ENCODE measurements at regions of chr20 and their contacts with region 1.

Region 1: DNA sequence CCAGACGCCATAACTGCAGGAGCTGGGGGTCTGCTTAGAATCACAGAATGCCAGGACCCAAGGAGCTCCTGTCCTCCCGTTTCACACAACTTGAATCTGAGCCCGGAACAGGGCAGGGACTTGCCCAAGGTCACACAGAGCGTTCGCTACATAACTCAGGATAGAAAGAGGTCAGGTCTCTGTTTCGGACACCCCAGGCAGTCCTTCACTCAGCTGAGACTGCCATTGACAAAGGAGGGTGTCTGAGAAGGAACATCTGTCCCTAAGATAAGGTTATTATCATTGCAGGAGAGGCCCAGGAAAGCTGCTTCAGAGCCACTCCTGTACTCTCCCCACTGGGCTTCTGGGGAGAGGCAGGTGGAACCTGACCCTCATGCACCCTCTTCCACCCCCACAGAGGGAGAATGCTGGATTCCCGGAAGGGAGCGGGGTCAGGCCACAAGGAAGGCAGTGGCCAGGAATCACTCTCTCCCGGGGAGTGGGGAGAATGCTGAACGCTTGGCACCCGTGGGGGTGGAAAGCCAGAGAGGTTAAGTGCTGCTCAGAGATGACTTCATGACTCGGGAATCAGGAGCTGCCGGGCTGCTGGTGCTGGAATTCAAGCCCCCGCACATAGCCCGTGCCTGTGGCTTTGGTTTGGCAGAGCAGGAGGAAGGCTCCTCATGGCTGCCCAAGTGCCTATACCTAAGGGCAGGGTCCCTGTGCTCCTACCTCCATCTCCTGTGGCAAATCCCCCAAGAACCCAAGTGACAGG is 10.7 kb downstream of the SDC4 start:
- DNase-seq: no peak
- ATAC-seq: no peak
- H3K4me3 Mint-ChIP-seq: no peak overlapping the region
- H3K27ac Mint-ChIP-seq: no peak overlapping the region
- H3K4me1 Mint-ChIP-seq: peaks cover 1% of the 10 kb centered on the region
- H3K27me3 Mint-ChIP-seq: no peaks in the 10 kb centered on the region
- CTCF ChIP-seq: no peak

Region 2: DNA sequence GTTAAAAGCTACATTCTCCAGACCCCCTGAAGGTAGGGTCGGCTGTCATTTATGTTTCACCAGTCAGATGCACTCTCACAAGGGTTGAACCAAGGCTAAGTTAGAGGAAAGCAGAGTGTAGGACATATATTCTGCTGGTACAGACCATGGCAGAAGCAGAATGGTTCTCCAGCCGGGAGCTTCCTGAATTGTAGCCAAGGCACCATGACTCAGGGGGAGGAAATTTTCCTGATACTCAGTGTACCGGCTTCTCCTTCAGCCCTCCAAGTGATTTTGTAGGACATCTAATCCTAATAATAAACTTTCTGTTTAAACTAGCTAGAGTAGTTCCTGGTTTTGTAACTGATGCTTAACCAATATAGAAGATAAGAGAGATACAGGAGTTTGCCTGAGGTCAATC is 69.0 kb before region 1 on chr20:
- CTCF ChIA-PET with region 1: no interaction called
- POLR2A ChIA-PET with region 1: no interaction called
- intact Hi-C with region 1: no loop called
- DNase-seq: no peak
- ATAC-seq: no peak
- H3K4me3 Mint-ChIP-seq: no peak overlapping the region
- H3K27ac Mint-ChIP-seq: no peak overlapping the region
- H3K4me1 Mint-ChIP-seq: no peaks in the 10 kb centered on the region
- H3K27me3 Mint-ChIP-seq: peaks cover 28% of the 10 kb centered on the region
- CTCF ChIP-seq: no peak

Region 3: GRCh38 chr20:45347936-45348778 is 10.6 kb after region 1 on chr20 and contains the start of gene SDC4:
- CTCF ChIA-PET with region 1: interaction called, 4 read pairs
- POLR2A ChIA-PET with region 1: interaction called, 20 read pairs
- intact Hi-C with region 1: no loop called
- DNase-seq: peak; percentile 68
- ATAC-seq: peak; percentile 80
- H3K4me3 Mint-ChIP-seq: peak within 1 kb of the TSS; percentile 79
- H3K27ac Mint-ChIP-seq: peak within 1 kb of the TSS; percentile 81
- H3K4me1 Mint-ChIP-seq: peaks cover 40% of the 10 kb centered on the region
- H3K27me3 Mint-ChIP-seq: peaks cover 2% of the 10 kb centered on the region
- CTCF ChIP-seq: no peak
- total RNA-seq, gene SDC4: 21.1 to 22.0 TPM

Region 4: GRCh38 chr20:45392733-45393132 is 55.2 kb after region 1 on chr20:
- CTCF ChIA-PET with region 1: no interaction called
- POLR2A ChIA-PET with region 1: no interaction called
- intact Hi-C with region 1: no loop called
- DNase-seq: no peak
- ATAC-seq: no peak
- H3K4me3 Mint-ChIP-seq: no peak overlapping the region
- H3K27ac Mint-ChIP-seq: no peak overlapping the region
- H3K4me1 Mint-ChIP-seq: peaks cover 13% of the 10 kb centered on the region
- H3K27me3 Mint-ChIP-seq: no peaks in the 10 kb centered on the region
- CTCF ChIP-seq: no peak